Left colon (tissue), 2 donors: ENCODE measurements at regions of chr17 and their contacts with region 1.

Region 1: DNA sequence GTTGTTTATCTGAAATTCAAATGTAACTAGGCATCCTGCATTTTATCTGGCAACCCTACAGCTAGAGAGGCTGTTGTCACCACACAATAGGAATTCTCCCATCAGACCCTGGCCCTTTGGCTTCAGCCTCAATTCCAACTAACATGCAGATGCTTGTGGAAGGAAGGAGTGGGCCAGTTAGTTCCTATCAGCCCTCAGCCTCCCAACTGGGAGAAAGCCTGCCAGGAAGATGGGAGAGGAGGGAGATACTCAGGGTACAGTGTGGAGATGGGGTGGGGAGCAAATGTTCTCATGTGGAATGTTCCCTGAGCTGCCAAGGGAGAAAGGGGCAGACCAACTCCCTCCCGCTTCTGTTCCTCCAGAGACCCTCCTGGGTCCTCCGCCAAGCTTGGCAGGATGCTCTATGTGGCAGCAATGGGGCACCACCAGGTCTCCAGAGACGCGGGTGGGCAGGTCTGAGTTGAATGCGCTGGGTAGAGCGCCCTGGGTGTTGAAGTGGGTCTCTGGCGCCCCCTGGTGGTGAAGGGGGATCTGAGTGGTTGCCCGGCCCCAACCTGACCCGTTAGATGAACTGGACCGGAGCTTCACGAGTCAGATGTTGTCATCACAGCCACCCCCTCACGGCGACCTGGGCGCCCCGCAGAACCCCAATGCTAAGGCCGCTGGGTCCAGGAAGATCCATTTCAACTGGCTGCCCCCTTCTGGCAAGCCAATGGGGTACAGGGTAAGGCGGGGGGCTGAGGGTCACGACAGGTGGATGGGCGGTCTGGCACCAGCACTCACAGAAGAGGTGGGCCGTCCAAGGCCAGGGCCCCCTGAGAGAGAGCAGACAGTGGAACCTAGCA is 15.2 kb downstream of the GALK1 start:
- DNase-seq: peak; percentile 62 to 92
- ATAC-seq: peak; percentile 61

Region 2: GRCh38 chr17:75633486-75634375 is 116.0 kb before region 1 on chr17:
- intact Hi-C with region 1: loop called in 1 of 2 experiments (anchors 2 kb)
- DNase-seq: peak; percentile 89 to 94
- ATAC-seq: peak; percentile 60

Region 3: GRCh38 chr17:75679706-75680442 is 69.9 kb before region 1 on chr17:
- intact Hi-C with region 1: loop called (anchors 2 to 10 kb)
- DNase-seq: peak; percentile 48 to 65
- ATAC-seq: peak; percentile 76